ENCODE measurements at regions of chr19 and their contacts with region 1.

Region 1: DNA sequence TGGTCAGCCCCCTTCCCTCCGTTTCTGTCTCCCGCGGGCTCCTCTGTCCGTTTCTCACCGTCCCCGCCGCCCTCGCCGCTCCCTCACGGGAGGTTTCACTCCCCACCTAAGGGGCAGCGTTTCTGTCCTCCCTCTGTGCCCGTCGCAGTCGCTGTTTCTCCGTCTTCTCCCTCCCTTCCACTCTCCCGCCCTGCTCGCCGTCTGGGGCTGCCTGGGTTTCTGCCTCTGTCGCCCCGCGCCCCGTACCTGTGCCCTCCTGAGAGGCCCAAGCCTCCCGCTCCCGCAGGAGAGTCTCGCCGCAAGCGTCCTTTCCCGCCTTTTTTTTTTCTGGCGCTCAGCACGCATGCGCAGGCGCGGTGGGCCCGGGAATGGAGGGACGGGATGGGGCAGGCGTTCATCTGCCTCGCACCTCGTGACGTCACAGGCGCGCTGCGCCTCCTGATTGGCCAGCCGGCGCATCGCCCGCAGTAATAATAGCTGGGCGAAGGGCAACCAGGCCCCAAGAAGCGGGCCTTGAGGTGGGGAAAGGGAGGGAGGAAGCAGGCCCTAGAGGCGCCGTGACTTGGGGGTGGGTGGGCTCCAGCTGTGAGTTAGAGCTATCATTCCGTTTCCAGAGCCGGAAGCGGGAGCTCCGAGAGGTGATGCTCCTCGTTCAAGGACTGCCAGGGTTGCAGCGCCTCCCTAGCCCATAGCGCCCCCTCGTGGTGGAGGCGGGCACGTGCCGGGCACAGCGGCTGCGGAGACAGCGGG is 15.4 kb downstream of the SSC5D start:
- DNase-seq: peak; percentile 80
- H3K4me3 ChIP-seq: peak overlapping the region; percentile 69
- H3K27ac ChIP-seq: no peak overlapping the region
- H3K27me3 ChIP-seq: no peaks in the 10 kb centered on the region
- CTCF ChIP-seq: peak; percentile 96

Region 2: DNA sequence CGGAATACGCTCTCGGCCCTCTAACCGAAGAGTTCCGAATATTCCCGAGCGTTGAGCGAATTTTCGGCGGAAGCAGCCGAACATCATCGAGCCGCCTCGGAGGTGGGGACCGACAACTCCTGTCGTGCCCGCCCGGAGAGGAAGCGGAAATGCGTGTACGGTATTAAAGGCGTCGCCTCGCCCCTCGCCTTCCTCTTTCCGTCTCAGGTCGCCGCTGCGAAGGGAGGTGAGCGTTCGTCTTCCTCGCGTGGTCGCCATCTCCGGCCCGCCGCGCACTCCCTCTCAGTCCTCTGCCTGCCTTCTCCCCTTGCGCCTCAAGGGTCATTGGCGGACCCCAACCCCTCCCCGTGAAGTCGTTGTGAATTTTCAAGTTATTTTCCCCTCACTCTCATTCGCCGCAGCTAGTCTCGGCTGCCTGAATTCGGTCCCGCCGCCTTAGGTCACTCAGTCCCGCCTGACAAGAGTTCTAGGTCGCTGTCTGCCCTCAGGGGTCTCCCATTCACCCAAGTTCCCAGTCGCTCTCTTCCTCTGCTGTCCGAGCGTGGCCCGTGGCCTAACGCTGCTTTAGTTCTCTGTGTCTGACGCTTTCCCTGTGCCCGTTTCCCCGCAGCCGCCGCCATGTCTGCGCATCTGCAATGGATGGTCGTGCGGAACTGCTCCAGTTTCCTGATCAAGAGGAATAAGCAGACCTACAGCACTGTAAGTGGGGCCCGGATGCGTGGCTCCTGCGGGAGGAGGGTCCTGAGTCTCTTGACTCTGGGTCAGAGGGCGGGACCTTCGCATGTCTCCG is 117.7 kb before region 1 on chr19 and contains the start of gene RPL28:
- CTCF ChIA-PET with region 1: interaction called, 10 read pairs
- POLR2A ChIA-PET with region 1: no interaction called
- DNase-seq: peak; percentile 95
- H3K4me3 ChIP-seq: peak within 1 kb of the TSS; percentile 99
- H3K27ac ChIP-seq: peak within 1 kb of the TSS; percentile 93
- H3K27me3 ChIP-seq: no peaks in the 10 kb centered on the region
- CTCF ChIP-seq: no peak
- polyA plus RNA-seq, gene RPL28: 325 and 535 TPM in 2 replicates

Region 3: GRCh38 chr19:55431183-55431683 is 72.4 kb before region 1 on chr19:
- CTCF ChIA-PET with region 1: no interaction called
- POLR2A ChIA-PET with region 1: no interaction called
- DNase-seq: no peak
- H3K4me3 ChIP-seq: no peak overlapping the region
- H3K27ac ChIP-seq: no peak overlapping the region
- H3K27me3 ChIP-seq: peaks cover 8% of the 10 kb centered on the region
- CTCF ChIP-seq: no peak

Region 4: DNA sequence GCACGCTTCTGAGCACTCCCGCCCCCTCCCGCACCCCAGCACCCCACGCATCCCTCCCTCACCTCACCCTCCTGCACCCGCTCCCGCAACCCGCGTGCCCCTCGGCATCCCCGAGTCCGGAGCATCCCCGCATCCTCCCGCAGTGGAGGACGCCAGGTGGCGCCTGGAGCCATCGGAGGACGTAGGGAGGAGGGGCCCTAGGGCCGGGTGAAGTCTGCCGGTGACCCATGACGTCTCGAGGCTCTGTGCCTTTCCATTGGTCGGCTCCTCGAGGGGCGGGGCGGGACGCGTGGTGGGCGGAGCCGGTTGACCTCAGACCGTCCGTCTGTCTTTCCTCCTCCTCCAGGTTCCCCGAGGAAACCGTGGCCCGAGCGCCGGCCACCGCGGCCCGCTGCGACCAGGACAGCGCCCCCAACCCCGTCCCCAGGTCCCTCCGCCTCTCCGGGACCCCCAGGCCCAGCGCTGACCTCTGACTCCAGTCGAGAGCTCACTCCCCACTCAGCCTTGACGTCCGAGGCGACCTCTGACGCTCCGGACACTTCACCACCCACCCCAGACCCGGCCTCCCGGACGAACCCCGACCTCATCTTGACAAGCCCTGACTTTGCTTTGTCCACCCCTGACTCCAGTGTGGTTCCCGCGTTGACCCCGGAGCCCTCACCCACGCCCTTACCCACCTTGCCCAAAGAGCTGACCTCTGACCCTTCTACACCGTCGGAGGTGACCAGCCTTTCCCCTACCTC is 13.4 kb after region 1 on chr19:
- CTCF ChIA-PET with region 1: interaction called, 30 read pairs
- POLR2A ChIA-PET with region 1: no interaction called
- DNase-seq: peak; percentile 86
- H3K4me3 ChIP-seq: peak overlapping the region; percentile 44
- H3K27ac ChIP-seq: no peak overlapping the region
- H3K27me3 ChIP-seq: no peaks in the 10 kb centered on the region
- CTCF ChIP-seq: peak; percentile 90

Region 5: GRCh38 chr19:55605207-55605636 is 101.5 kb after region 1 on chr19:
- CTCF ChIA-PET with region 1: interaction called, 19 read pairs
- POLR2A ChIA-PET with region 1: no interaction called
- DNase-seq: peak; percentile 94
- H3K4me3 ChIP-seq: peak overlapping the region; percentile 73
- H3K27ac ChIP-seq: peak overlapping the region; percentile 88
- H3K27me3 ChIP-seq: no peaks in the 10 kb centered on the region
- CTCF ChIP-seq: no peak

Region 6: DNA sequence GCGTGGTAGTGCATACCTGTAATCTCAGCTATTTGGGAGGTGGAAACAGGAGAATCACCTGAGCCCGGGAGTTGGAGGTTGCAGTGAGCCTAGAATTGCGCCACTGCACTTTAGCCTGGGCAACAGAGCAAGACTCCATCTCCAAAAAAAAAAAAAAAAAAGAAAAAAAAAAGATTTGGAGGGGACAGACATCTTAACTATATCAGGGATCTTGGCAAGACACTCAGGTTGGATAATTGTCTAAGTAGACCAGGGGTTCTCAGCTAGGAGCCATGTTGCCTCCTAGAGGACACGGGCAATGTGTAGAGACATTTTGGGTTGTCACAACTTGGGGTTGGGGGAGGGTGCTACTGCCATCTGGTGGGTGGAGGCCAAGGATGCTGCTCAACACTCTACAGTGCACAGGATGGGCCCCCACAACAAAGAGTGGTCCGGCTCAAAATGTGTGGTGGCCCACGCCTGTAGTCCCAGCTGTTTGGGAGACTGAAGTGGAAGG is 135.2 kb after region 1 on chr19:
- CTCF ChIA-PET with region 1: interaction called, 10 read pairs
- POLR2A ChIA-PET with region 1: no interaction called
- DNase-seq: no peak
- H3K4me3 ChIP-seq: no peak overlapping the region
- H3K27ac ChIP-seq: no peak overlapping the region
- H3K27me3 ChIP-seq: no peaks in the 10 kb centered on the region
- CTCF ChIP-seq: peak; percentile 48

Measured in AG04450 (cell line).